ENCODE measurements at regions of chr1 and their contacts with region 1.

Region 1: DNA sequence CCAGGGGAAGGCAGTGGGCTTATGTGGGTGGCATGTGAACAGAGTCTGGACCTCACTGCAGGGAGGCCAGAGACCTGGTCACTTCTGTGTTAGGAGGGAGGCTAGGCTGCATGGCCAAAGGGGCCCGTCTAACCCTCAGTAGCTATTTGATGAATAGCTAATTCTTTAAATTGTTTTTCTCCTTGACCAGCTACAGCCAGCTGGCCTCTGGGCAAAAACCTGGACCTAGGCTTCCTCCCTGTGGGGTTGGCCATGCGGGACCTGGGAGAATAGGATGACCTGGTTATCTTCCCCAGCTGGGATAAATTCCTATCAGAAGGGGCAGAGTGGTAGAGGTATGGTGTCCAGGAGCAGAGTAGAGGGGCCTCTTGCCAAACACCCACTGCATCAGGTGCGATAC is 79.4 kb downstream of the TNR start:
- DNase-seq: no peak
- H3K4me3 ChIP-seq: no peak overlapping the region
- H3K27ac ChIP-seq: no peak overlapping the region
- H3K4me1 ChIP-seq: no peaks in the 10 kb centered on the region
- H3K27me3 ChIP-seq: peaks cover 3% of the 10 kb centered on the region
- CTCF ChIP-seq: no peak

Region 2: GRCh38 chr1:175174309-175175165 is 489.5 kb before region 1 on chr1:
- CTCF ChIA-PET with region 1: no interaction called
- dilution Hi-C with region 1: no loop called
- in situ Hi-C with region 1: no loop called
- intact Hi-C with region 1: no loop called
- DNase-seq: no peak
- H3K4me3 ChIP-seq: no peak overlapping the region
- H3K27ac ChIP-seq: no peak overlapping the region
- H3K4me1 ChIP-seq: peaks cover 33% of the 10 kb centered on the region
- H3K27me3 ChIP-seq: no peaks in the 10 kb centered on the region
- CTCF ChIP-seq: no peak

Region 3: GRCh38 chr1:175702079-175702795 is 38.2 kb after region 1 on chr1:
- CTCF ChIA-PET with region 1: no interaction called
- dilution Hi-C with region 1: loop called (anchors 5 kb)
- in situ Hi-C with region 1: no loop called
- intact Hi-C with region 1: no loop called
- DNase-seq: no peak
- H3K4me3 ChIP-seq: no peak overlapping the region
- H3K27ac ChIP-seq: no peak overlapping the region
- H3K4me1 ChIP-seq: no peaks in the 10 kb centered on the region
- H3K27me3 ChIP-seq: peaks cover 6% of the 10 kb centered on the region
- CTCF ChIP-seq: no peak

Measured in mammary epithelial cell (primary cell).